Heart right ventricle (tissue), 16 donors: ENCODE measurements at regions of chr9 and their contacts with region 1.

Region 1: DNA sequence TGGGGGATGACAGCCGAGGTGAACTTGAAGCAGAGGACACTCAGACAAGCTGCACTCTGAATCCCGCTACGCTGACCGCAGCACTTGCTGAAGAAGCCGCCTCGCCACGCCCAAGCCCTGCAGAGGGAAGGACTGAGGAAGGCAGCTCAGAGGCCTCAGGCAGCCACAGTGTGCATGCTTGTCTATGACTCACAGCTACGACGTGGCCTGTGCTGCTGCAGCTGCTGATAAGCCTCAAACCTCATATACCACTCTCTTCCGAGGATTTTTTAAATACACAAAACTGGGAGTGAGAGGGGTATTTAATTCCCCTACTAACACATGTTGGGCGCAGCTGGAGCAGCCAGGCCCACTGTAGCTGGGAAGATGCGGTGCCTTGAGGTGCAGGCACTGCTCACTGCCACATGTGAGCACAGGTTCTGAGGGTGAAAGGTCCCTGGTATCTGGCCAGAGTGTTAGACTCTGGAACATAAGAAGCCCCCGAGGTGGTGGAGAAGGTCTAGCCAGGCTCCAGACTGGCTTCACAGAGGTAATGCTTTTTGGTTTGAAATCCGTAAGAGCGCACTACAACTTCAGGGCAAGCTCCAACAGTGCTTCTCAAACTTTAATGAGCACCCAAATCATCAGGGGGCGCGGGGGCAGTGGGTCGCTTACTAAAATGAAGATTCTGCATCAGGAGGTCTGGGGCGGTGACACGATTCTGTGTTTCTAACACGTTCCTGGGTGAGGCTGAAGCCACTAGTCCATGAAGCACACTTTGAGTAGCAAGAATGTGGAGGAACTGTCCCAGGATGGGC is 196.8 kb downstream of the AUH start:
- DNase-seq: peak; percentile 26 to 64
- ATAC-seq: peak in 7 of 8 donors; percentile 40 to 77 (median 48)
- H3K4me3 ChIP-seq: no peak overlapping the region
- H3K27ac ChIP-seq: peak overlapping the region in 1 of 10 donors; percentile 70
- H3K4me1 ChIP-seq: peaks cover 0 to 50% (median 12%) of the 10 kb centered on the region in 9 donors
- H3K27me3 ChIP-seq: no peaks in the 10 kb centered on the region
- CTCF ChIP-seq: no peak

Region 2: DNA sequence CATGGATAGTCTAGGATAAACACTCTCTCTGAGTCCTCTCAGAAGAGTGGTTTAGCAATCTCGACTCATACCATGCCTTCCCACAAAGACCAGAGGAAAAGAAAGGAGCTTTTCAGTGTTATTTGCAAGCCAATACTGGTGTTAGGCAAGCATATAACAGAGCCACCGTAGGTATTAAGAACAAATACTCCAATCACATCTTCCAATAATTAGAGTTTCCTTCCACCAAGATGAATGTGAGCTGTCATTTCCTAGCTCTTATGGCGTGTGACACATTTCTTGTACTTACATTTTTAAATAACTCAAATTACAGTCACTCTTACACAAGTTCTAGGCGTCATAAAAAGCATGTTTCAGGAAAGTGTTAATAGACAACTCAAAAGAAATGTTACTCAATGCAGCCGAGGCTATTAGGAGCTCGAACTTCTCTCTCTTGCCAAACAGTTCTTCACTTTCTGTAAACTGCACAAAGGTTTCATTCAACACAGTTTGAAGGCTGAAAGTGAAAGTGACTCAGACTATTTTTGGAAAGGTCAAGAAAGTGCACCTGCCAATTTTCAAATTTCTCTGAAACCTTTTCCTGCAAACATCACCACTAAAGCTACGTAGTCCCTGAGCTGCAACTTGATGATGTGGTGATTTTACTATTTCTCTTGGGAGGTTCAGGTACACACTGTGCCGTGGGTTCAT is 43.0 kb after region 1 on chr9:
- intact Hi-C with region 1: loop called in 1 of 10 experiments (anchors 5 kb)
- DNase-seq: no peak
- ATAC-seq: peak; percentile 66 to 92 (median 81)
- H3K4me3 ChIP-seq: peak overlapping the region in 5 of 10 donors; percentile 1 to 18 (median 6)
- H3K27ac ChIP-seq: peak overlapping the region in 9 of 10 donors; percentile 39 to 85 (median 63)
- H3K4me1 ChIP-seq: peaks cover 7 to 25% (median 16%) of the 10 kb centered on the region in 9 donors
- H3K27me3 ChIP-seq: no peaks in the 10 kb centered on the region
- CTCF ChIP-seq: no peak

Region 3: GRCh38 chr9:92119586-92119985 is 954.7 kb after region 1 on chr9:
- intact Hi-C with region 1: no loop called
- DNase-seq: no peak
- ATAC-seq: no peak
- H3K4me3 ChIP-seq: no peak overlapping the region
- H3K27ac ChIP-seq: peak overlapping the region in 1 of 10 donors; percentile 68
- H3K4me1 ChIP-seq: peaks cover 0 to 13% (median 5%) of the 10 kb centered on the region in 9 donors
- H3K27me3 ChIP-seq: no peaks in the 10 kb centered on the region
- CTCF ChIP-seq: no peak